ENCODE measurements at regions of chr1 and their contacts with region 1.

Region 1: DNA sequence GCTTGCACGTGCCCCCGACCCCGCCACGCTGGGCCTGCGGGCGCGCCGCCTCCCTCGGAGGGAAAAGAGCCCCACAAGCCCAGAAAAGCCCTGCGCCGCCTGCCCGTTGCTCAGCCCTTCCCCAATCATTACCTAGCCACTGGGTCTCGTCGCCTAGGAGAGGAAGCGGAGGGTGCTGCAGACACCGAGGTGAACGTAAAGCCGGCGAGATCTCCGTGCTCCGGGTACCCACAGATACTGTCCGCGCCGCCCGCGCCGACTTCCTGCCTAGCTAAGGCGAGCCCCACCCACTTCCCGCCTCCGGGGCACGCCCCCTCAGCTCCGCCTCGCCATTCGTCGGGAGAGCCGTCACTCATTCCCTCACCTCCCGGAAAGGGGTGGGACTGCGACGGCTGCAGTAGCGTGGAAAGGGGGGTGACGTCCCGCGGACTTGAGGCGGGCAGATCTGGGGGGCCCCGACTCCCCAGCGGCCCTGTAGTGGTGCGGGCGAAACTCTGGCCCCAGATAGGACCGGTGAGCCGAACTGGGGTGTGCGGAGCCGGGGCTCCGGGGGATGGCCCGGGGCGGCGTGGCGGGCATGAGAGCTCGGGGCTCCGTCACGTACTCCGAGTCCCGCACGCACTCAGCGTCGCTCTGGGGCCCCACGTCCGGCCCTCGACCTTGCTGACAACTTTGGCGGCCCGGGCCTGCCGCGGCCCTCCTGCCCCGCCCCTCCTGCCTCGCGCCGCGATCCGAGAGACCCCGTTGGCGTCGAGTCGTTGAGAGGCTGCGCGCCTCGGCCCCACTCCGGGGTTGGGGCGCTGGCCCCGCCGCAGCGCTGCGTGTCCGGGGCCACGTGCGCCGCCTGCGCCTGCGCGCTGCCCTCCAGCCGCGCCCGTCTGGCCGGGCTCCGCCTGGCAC is at the start of gene ENO1:
- DNase-seq: peak; percentile 99
- H3K4me3 Mint-ChIP-seq: peak within 1 kb of the TSS; percentile 99
- H3K27ac Mint-ChIP-seq: peak within 1 kb of the TSS; percentile 99
- H3K4me1 Mint-ChIP-seq: peaks cover 44% of the 10 kb centered on the region
- H3K27me3 Mint-ChIP-seq: no peaks in the 10 kb centered on the region
- total RNA-seq, gene ENO1: 2,453 to 2,472 TPM

Region 2: DNA sequence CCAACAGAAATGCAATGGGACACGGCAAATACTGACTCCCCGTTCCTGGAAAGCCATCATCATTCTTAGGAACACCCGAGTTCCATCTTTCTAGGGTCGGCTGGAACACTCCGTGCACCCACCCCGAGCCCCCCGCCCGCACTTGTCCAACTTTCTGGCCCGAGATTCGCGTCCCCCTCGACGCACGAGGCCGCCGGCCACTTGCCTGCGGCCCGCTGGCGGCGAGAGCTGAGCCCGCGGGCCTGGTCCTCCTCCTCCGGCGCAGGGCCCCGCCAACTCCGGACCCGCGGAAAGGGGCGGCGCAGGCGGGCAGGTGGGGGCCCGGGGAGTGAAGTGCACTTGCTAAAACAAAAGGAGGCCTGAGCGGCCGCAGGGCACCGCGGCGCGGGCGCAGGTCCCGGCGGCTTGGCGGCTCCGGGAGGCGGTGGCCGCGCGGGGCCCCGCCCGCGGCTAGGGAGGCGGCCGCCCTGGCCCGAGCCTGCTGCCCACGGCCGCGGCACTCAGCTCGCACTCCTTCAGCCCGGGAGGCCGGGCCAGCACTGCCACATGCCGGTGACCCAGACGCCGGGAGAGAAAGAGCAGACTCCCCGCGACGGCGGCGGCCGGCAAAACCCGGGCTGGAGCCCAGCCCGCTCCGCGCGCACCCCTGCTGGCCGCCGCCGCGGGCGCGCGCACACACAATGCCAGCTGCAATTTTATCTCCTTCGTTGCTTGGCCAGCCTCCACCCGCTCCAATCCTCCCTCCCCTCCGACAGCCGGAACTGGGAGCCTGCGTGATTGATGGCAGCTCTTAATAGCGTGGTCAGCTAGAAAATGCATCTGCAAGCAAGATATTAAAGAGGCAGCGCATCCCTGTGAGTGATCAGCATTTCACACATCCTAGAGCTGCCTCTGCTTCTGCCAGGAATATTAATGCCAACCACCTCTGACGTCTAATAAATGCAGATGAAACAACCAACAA is 175.6 kb before region 1 on chr1:
- CTCF ChIA-PET with region 1: no interaction called
- POLR2A ChIA-PET with region 1: interaction called, 13 read pairs
- DNase-seq: peak; percentile 79
- H3K4me3 Mint-ChIP-seq: peak overlapping the region; percentile 88
- H3K27ac Mint-ChIP-seq: peak overlapping the region; percentile 76
- H3K4me1 Mint-ChIP-seq: peaks cover 47% of the 10 kb centered on the region
- H3K27me3 Mint-ChIP-seq: peaks cover 21% of the 10 kb centered on the region

Region 3: GRCh38 chr1:8858888-8859706 is 19.6 kb before region 1 on chr1:
- CTCF ChIA-PET with region 1: interaction called, 38 read pairs
- POLR2A ChIA-PET with region 1: interaction called, 221 read pairs
- DNase-seq: peak; percentile 54
- H3K4me3 Mint-ChIP-seq: no peak overlapping the region
- H3K27ac Mint-ChIP-seq: peak overlapping the region; percentile 77
- H3K4me1 Mint-ChIP-seq: peaks cover 56% of the 10 kb centered on the region
- H3K27me3 Mint-ChIP-seq: no peaks in the 10 kb centered on the region

Region 4: GRCh38 chr1:8899076-8899475 is 20.4 kb after region 1 on chr1:
- CTCF ChIA-PET with region 1: interaction called, 19 read pairs
- POLR2A ChIA-PET with region 1: interaction called, 106 read pairs
- DNase-seq: no peak
- H3K4me3 Mint-ChIP-seq: no peak overlapping the region
- H3K27ac Mint-ChIP-seq: peak overlapping the region; percentile 99
- H3K4me1 Mint-ChIP-seq: peaks cover 48% of the 10 kb centered on the region
- H3K27me3 Mint-ChIP-seq: no peaks in the 10 kb centered on the region

Region 5: GRCh38 chr1:8941906-8942305 is 63.2 kb after region 1 on chr1:
- CTCF ChIA-PET with region 1: interaction called, 3 read pairs
- POLR2A ChIA-PET with region 1: interaction called, 38 read pairs
- DNase-seq: no peak
- H3K4me3 Mint-ChIP-seq: no peak overlapping the region
- H3K27ac Mint-ChIP-seq: peak overlapping the region; percentile 34
- H3K4me1 Mint-ChIP-seq: peaks cover 88% of the 10 kb centered on the region
- H3K27me3 Mint-ChIP-seq: no peaks in the 10 kb centered on the region

Region 6: GRCh38 chr1:8970870-8971337 is 92.2 kb after region 1 on chr1:
- CTCF ChIA-PET with region 1: interaction called, 7 read pairs
- POLR2A ChIA-PET with region 1: interaction called, 26 read pairs
- DNase-seq: peak; percentile 57
- H3K4me3 Mint-ChIP-seq: peak overlapping the region; percentile 98
- H3K27ac Mint-ChIP-seq: peak overlapping the region; percentile 99
- H3K4me1 Mint-ChIP-seq: peaks cover 56% of the 10 kb centered on the region
- H3K27me3 Mint-ChIP-seq: no peaks in the 10 kb centered on the region

Measured in activated CD4-positive, alpha-beta memory T cell treated with anti-CD3 and anti-CD28 coated beads, Interleukin-2, amount 10 ng/mL, durations not matched to agents 7 days and 5 days (primary cell).